Activated CD4-positive, alpha-beta memory T cell treated with anti-CD3 and anti-CD28 coated beads, Interleukin-2, amount 10 ng/mL, durations not matched to agents 7 days and 5 days (primary cell): ENCODE measurements at regions of chr19 and their contacts with region 1.

Region 1: DNA sequence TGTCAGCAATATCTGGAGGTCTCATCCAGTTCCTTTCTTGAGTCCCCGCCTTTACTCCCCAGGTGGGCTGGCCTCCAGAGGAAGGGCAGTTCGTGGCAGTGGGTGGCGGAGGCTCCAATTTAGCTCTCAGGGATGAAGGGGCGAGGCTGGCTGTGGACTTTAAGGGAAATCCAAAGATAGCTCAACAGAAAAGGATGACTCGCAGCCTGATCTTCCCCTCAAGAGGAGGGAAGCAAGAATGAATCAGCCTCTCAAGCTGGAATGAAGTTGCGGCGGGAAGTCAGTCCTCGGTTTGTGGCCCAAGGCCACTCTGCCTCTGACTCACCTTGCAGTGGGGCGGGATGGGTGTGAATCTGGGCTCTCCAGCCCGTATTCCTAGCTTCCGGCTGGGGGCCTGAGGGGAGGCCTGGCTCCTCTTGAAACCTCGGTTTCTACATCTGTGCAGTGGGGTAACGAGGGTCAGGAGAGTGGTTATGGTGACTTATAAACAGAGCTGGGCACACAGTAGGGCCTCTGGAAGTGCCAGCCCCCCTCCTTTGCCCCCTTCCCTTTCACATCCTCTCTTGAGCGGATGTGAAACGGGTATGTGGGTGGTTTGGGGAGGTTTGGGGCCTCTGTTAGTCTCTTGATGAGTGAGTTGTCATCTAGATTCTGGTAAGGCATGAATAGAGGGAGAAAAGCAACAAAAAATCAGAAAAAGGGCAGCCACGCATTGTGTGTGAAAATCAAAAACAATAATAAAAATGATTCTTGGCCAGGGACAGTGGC is 10.5 kb upstream of the SMG9 start:
- DNase-seq: peak; percentile 91
- H3K4me3 Mint-ChIP-seq: peak overlapping the region; percentile 56
- H3K27ac Mint-ChIP-seq: peak overlapping the region; percentile 96
- H3K4me1 Mint-ChIP-seq: peaks cover 69% of the 10 kb centered on the region
- H3K27me3 Mint-ChIP-seq: no peaks in the 10 kb centered on the region

Region 2: DNA sequence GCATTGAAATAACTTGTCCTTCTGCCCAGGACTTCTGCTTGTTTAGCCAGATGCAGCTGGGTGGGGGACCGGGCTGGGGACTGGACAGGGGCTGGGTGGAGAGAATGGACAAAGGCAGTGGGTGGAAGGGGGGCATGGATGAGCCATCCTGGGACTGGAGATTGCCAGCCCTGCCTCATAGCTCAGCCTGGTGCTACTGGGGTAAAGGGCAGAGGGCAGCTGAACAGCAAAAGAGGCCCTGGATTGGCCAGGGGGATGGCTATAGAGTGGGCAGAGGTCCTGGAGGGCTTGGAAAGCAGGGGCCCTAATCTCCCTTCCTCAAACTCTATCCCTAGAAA is 77.7 kb before region 1 on chr19:
- CTCF ChIA-PET with region 1: no interaction called
- POLR2A ChIA-PET with region 1: no interaction called
- DNase-seq: no peak
- H3K4me3 Mint-ChIP-seq: no peak overlapping the region
- H3K27ac Mint-ChIP-seq: no peak overlapping the region
- H3K4me1 Mint-ChIP-seq: no peaks in the 10 kb centered on the region
- H3K27me3 Mint-ChIP-seq: peaks cover 2% of the 10 kb centered on the region

Region 3: GRCh38 chr19:43754503-43755255 is 10.6 kb before region 1 on chr19 and contains the start of gene SMG9:
- CTCF ChIA-PET with region 1: interaction called, 111 read pairs
- POLR2A ChIA-PET with region 1: interaction called, 259 read pairs
- DNase-seq: peak; percentile 98
- H3K4me3 Mint-ChIP-seq: peak within 1 kb of the TSS; percentile 97
- H3K27ac Mint-ChIP-seq: peak within 1 kb of the TSS; percentile 99
- H3K4me1 Mint-ChIP-seq: peaks cover 67% of the 10 kb centered on the region
- H3K27me3 Mint-ChIP-seq: no peaks in the 10 kb centered on the region
- total RNA-seq, gene SMG9: 58.1 to 64.6 TPM

Region 4: GRCh38 chr19:43784981-43785808 is 19.9 kb after region 1 on chr19:
- CTCF ChIA-PET with region 1: interaction called, 124 read pairs
- POLR2A ChIA-PET with region 1: interaction called, 152 read pairs
- DNase-seq: peak; percentile 65
- H3K4me3 Mint-ChIP-seq: peak overlapping the region; percentile 18
- H3K27ac Mint-ChIP-seq: peak overlapping the region; percentile 89
- H3K4me1 Mint-ChIP-seq: peaks cover 46% of the 10 kb centered on the region
- H3K27me3 Mint-ChIP-seq: peaks cover 5% of the 10 kb centered on the region